Posterior cingulate gyrus (tissue), 11 donors: ENCODE measurements at regions of chr6 and their contacts with region 1.

Region 1: DNA sequence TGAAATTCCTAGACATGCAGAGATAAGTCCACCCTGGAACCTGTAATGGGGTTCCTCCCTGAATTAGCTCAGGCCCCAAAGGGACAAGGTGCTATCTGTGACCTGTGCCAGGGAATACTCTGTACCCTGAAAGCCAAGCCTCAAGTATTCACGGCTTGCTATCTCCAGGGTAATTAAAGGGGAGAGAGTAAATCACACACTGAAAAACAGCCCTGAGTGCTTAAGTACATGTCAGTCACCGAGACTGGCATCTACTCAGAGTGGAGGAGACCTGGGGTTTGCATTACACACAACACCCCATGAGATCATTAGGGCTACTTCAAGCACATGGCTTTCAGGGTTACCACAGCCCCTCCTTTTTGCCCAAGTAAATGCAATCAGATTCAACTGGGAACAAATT is 188.1 kb downstream of the CD83 start:
- DNase-seq: no peak

Region 2: GRCh38 chr6:14371530-14371929 is 65.9 kb after region 1 on chr6:
- intact Hi-C with region 1: no loop called
- DNase-seq: no peak

Region 3: GRCh38 chr6:14876778-14877613 is 571.4 kb after region 1 on chr6:
- intact Hi-C with region 1: no loop called
- DNase-seq: no peak

Region 4: DNA sequence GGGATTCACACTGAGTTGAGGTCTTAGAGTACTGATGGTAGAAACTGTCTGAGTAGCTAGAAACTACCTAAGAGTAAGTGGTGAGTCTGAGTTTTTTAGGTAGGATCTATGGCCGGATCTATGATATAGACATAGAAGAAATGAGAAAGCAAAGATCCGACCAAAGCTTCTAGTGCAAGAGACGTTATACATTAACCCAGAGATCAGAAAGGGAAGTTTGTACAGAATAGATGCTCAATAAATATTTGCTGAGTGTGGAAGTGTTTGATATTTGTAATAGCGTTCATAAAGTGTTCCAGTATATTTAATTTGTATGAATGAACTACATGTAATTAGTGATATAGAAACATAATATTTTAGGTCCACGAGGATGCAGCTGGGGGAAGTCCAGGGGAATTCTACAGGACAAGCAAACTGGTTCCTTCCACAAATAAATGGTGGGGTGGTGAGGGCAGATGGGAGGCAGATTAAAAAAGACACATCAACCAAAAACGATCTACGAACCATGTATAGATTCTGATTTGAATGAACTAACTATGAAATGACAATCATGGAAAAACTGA is 908.3 kb after region 1 on chr6:
- intact Hi-C with region 1: loop called (anchors 5 kb)
- DNase-seq: no peak